ENCODE measurements at regions of chr9 and their contacts with region 1.

Region 1: GRCh38 chr9:37913480-37914153 is 9.7 kb upstream of the SLC25A51 start:
- DNase-seq: peak in 4 of 5 donors; percentile 66 to 81 (median 78)
- ATAC-seq: peak; percentile 70 to 85 (median 82)
- H3K4me3 ChIP-seq: no peak overlapping the region
- H3K27ac ChIP-seq: peak overlapping the region in 1 of 12 donors; percentile 0
- H3K4me1 ChIP-seq: peaks cover 0 to 42% (median 28%) of the 10 kb centered on the region in 12 donors
- H3K27me3 ChIP-seq: no peaks in the 10 kb centered on the region
- CTCF ChIP-seq: peak in 11 of 12 donors; percentile 92 to 99 (median 98)
- POLR2A ChIP-seq: no peak

Region 2: GRCh38 chr9:37746848-37747753 is 166.5 kb before region 1 on chr9:
- intact Hi-C with region 1: loop called in 1 of 10 experiments (anchors 10 kb)
- DNase-seq: peak in 2 of 5 donors; percentile 39 to 49
- ATAC-seq: peak in 3 of 4 donors; percentile 77 to 88 (median 78)
- H3K4me3 ChIP-seq: no peak overlapping the region
- H3K27ac ChIP-seq: no peak overlapping the region
- H3K4me1 ChIP-seq: no peaks in the 10 kb centered on the region
- H3K27me3 ChIP-seq: no peaks in the 10 kb centered on the region
- CTCF ChIP-seq: peak; percentile 76 to 94 (median 84)
- POLR2A ChIP-seq: no peak

Region 3: DNA sequence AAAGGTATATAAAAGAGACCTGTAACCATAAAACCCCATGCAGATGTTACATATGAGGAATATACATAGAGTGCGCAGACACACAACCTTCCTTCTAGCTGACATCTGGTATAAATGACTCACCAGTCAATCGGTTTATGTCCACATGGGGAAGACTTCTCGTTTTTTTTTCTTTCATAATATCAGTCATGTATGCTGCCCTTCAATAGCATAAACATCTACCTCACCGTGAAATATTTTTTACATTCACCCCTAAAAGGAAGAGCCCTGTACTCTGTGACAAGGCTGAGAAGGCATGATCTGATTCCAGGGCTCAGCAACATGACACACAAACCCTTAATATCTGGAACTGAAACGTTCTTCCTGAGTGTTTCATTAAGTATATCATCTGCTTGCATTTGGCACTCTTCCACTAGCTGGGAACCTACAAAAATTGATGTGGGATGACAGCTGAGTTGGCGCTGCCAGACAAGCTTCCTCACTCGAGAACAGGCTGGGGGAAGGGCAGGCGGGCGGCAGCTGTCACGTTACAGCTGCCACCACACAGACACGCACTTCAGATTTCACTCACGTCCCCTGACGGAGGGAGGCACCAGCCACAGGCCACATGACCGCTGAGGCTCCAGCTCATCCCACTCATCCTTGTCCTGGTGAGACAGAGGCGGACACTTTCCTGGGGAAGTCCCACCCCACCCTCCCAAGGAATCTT is 81.2 kb after region 1 on chr9:
- intact Hi-C with region 1: loop called in 2 of 10 experiments (anchors 1 to 2 kb)
- DNase-seq: peak; percentile 84 to 92 (median 87)
- ATAC-seq: peak; percentile 90 to 91 (median 90)
- H3K4me3 ChIP-seq: peak overlapping the region in 6 of 12 donors; percentile 10 to 27 (median 17)
- H3K27ac ChIP-seq: peak overlapping the region in 11 of 12 donors; percentile 3 to 84 (median 52)
- H3K4me1 ChIP-seq: peaks cover 10 to 91% (median 75%) of the 10 kb centered on the region in 12 donors
- H3K27me3 ChIP-seq: no peaks in the 10 kb centered on the region
- CTCF ChIP-seq: no peak
- POLR2A ChIP-seq: no peak

Region 4: DNA sequence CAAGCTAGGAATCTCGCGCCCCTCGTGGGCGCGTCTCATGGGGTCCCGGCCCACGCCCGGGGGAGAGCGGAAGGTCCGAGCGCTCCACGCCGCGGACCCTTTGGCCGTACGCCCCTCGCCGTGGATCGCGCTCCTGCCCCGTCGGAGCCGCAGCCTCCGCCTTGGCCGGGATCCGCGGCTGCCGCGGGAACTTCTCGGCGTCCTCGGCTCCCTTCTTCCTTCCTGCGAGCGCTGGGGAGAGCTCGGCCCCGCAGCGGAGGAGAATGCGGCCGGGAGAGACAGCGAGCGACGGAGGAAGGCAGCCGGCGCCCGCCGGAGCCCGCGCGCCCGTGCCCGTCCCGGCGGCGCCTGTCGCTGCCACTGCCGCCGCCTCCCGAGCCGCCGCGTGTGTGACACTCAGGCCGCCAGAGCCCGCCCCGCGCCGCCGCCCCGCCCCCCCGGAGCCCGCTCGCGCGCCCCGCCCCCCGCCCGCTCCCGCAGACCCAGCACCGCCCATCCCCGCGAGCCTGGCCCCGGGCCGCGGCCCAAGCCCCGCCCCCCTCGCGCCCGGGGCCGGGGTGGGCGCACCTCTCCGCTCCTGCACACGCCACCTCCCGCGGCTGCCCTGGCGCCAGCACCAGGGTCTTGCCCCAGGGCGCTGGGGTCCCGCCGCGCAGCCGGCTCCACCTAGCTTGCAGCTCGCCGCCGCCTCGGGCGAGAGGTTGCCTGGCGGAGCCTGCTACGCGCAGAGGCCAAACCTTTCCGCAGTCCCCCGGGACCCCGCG is 155.4 kb after region 1 on chr9 and contains the start of gene SHB:
- intact Hi-C with region 1: loop called in 8 of 10 experiments (anchors 2 to 5 kb)
- DNase-seq: peak; percentile 85 to 92 (median 89)
- ATAC-seq: peak; percentile 26 to 83 (median 69)
- H3K4me3 ChIP-seq: peak within 1 kb of the TSS; percentile 78 to 100 (median 94)
- H3K27ac ChIP-seq: peak within 1 kb of the TSS; percentile 91 to 100 (median 96)
- H3K4me1 ChIP-seq: peaks cover 0 to 54% (median 22%) of the 10 kb centered on the region in 12 donors
- H3K27me3 ChIP-seq: peaks cover 0 to 13% (median 0%) of the 10 kb centered on the region in 9 donors
- CTCF ChIP-seq: peak in 3 of 12 donors; percentile 4 to 67 (median 48)
- POLR2A ChIP-seq: peak in 1 of 2 donors; percentile 89
- total RNA-seq, gene SHB: 10.7 to 31.4 (median 21.4) TPM

Region 5: GRCh38 chr9:38362852-38363593 is 449.4 kb after region 1 on chr9:
- intact Hi-C with region 1: loop called in 9 of 10 experiments (anchors 1 to 10 kb)
- DNase-seq: peak in 3 of 5 donors; percentile 20 to 44 (median 26)
- ATAC-seq: peak; percentile 73 to 90 (median 81)
- H3K4me3 ChIP-seq: peak overlapping the region in 1 of 12 donors; percentile 32
- H3K27ac ChIP-seq: no peak overlapping the region
- H3K4me1 ChIP-seq: peaks cover 0 to 9% (median 0%) of the 10 kb centered on the region in 12 donors
- H3K27me3 ChIP-seq: no peaks in the 10 kb centered on the region
- CTCF ChIP-seq: peak; percentile 36 to 72 (median 66)
- POLR2A ChIP-seq: no peak

Region 6: DNA sequence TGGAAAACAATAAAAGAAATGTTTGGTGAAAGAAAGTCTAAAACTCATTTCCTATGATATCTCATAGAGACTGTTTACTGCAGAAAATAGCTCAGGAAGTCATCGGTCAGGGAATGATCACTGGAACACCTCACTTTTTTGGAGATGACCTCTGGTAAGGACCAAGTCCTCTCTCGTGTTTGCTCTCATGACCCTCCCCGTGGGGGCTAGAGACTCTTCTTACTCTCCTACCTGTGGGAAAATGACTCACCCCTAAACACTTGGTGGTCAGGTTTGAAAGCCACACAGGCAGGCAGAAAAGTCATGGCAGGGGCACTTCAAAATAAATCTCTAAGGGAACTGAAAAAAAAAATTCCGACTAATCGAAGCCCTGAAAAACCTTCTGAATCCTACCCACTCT is 758.1 kb after region 1 on chr9:
- intact Hi-C with region 1: loop called in 1 of 10 experiments (anchors 10 kb)
- DNase-seq: no peak
- ATAC-seq: no peak
- H3K4me3 ChIP-seq: no peak overlapping the region
- H3K27ac ChIP-seq: peak overlapping the region in 2 of 12 donors; percentile 8 to 32
- H3K4me1 ChIP-seq: peaks cover 0 to 16% (median 5%) of the 10 kb centered on the region in 12 donors
- H3K27me3 ChIP-seq: no peaks in the 10 kb centered on the region
- CTCF ChIP-seq: no peak
- POLR2A ChIP-seq: no peak

Measured in heart left ventricle (tissue), 16 donors.